ENCODE measurements at regions of chr2 and their contacts with region 1.

Region 1: DNA sequence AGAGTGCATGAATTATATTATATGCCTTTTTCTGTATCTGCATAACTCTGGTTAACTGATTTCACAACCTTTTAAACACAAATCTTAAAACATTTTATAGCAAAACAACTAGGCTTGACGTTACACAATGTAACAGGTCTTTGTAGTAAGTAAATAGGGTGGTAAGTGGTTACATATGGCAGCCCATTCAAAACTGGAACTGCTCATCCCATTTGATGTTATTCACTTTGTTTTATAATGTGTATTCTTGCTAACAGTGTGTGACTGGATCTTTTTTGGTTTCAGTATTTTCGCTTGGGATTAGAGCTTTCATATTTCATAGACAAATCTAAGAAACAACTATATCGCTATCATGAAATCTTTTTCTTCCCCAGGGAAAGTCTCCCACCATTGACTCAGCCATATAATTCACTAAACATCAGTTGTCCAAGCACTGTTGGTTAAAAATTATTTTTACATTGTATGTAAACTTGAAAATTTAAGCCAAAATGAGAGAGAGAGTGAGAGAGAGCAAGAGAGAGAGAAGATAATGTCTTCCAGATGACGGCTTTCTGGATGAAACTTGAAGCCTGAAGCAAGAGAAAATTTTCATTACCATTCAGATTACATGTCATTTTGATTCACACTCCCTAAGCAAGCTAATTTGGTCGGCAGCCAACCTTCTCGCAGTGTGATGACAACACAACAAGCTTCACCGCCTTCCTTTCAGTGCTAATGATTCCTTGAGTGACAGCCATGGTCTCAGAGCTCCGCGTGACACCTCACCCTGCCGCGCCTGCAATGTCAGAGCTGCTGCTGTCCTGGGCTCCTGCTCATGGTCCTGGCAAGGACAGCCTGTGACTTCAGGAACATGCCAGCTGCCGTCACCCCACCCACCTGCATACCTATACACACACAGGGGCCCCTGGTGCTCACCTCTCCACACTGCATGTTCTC is 946.9 kb upstream of the SOX11 start:
- DNase-seq: peak; percentile 98
- H3K4me3 ChIP-seq: peak overlapping the region; percentile 22
- H3K27ac ChIP-seq: peak overlapping the region; percentile 94
- H3K4me1 ChIP-seq: peaks cover 48% of the 10 kb centered on the region
- H3K27me3 ChIP-seq: no peaks in the 10 kb centered on the region
- CTCF ChIP-seq: no peak

Region 2: GRCh38 chr2:4653991-4654390 is 91.3 kb before region 1 on chr2:
- CTCF ChIA-PET with region 1: no interaction called
- POLR2A ChIA-PET with region 1: no interaction called
- intact Hi-C with region 1: loop called (anchors 5 kb)
- DNase-seq: peak; percentile 87
- H3K4me3 ChIP-seq: no peak overlapping the region
- H3K27ac ChIP-seq: peak overlapping the region; percentile 88
- H3K4me1 ChIP-seq: peaks cover 38% of the 10 kb centered on the region
- H3K27me3 ChIP-seq: no peaks in the 10 kb centered on the region
- CTCF ChIP-seq: no peak

Region 3: DNA sequence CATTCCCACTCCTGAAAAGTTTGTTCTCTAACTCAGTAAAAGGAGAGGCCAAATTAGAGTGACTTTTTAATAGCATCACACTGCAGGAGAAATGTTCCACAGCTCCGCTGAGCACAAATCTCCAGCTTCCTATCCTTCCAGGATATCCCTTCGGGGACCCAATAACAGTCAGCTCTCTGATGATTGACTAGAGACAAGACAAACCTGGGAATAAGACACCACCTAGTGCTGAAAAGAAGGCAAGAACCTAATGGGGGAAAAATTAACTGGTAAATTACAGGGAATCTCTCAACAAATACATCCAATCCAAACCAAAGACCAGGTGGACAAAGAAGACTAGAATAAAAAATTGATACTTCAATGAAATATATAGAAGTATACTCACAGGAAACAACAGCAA is 30.3 kb before region 1 on chr2:
- CTCF ChIA-PET with region 1: no interaction called
- POLR2A ChIA-PET with region 1: no interaction called
- intact Hi-C with region 1: no loop called
- DNase-seq: peak; percentile 72
- H3K4me3 ChIP-seq: no peak overlapping the region
- H3K27ac ChIP-seq: peak overlapping the region; percentile 22
- H3K4me1 ChIP-seq: no peaks in the 10 kb centered on the region
- H3K27me3 ChIP-seq: no peaks in the 10 kb centered on the region
- CTCF ChIP-seq: peak; percentile 57